Activated CD8-positive, alpha-beta memory T cell treated with anti-CD3 and anti-CD28 coated beads, Interleukin-2, amount 10 ng/mL, durations not matched to agents 7 days and 5 days (primary cell): ENCODE measurements at regions of chr16 and their contacts with region 1.

Region 1: DNA sequence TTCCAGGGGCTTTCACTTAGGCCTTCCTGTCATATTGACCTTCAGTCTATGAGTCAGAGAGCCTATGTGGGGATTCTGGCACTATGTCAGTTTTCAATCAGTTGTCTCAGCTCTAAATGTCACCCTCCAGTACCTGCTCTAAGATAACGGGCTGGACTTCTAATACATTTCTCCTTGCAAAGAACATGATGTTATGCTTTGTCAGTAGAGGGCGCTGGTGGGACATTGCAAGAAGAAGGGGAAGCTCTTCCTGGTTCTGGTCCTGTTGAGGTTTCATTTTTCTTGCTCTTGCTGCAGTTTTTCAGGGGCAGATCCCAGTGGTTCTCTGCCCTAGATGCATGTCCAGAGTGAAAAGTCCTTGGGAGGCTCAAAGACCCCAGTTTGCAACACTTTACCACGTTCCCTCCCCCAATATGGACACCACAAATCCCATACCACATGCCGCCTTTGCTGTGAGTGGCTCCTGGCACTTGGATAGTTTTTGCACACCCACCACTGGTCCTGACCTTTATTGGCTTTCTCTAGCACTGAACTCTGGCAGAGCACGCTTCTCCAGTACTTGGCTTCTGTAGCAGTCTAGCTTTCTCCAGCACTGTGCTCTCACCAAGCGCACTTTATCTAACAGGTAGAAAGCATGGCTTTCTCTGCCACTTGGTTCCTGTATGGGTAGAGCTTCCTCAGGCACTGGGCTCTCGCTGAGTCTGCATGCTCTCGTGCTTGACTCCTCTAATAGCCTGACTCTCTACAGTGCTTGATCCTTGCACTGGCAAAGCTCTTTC is 49.0 kb downstream of the BCL7C start:
- DNase-seq: peak; percentile 89
- ATAC-seq: peak; percentile 95
- H3K4me3 Mint-ChIP-seq: peak overlapping the region; percentile 45
- H3K27ac Mint-ChIP-seq: peak overlapping the region; percentile 80
- H3K4me1 Mint-ChIP-seq: peaks cover 12% of the 10 kb centered on the region
- H3K27me3 Mint-ChIP-seq: peaks cover 2% of the 10 kb centered on the region

Region 2: DNA sequence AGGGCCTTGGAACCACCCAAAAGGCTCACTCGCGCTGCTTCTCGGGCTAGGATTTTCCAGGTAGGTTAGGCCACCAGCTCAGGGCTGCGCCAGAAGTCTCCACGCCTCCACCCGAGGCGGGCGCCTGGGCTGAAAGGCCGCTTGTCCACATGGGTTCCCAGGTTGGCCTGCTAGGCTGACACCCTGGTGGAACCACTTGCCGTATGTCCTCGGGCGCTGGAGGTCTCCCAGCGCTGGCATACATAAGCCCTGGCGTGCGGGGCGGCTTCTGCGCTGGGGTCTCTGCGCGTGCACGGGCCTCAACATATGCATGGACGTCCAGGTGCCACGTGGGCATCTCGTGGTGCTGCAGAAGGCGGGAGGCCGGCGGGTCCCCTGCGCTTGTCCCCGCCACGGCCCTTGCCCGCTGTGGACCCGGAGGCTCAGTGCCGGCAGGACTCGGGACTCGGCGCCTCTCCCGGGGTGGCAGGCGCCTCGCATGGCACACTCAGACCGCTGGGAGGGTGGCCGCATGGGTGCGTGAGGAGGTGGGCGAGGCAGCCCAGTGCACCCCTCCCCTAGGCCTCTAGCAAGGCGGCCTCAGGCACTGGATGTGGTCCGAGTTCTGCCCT is 10.6 kb before region 1 on chr16:
- CTCF ChIA-PET with region 1: interaction called, 15 read pairs
- DNase-seq: no peak
- ATAC-seq: no peak
- H3K4me3 Mint-ChIP-seq: no peak overlapping the region
- H3K27ac Mint-ChIP-seq: no peak overlapping the region
- H3K4me1 Mint-ChIP-seq: no peaks in the 10 kb centered on the region
- H3K27me3 Mint-ChIP-seq: peaks cover 4% of the 10 kb centered on the region

Region 3: GRCh38 chr16:30874821-30875717 is 30.2 kb after region 1 on chr16:
- CTCF ChIA-PET with region 1: interaction called, 44 read pairs
- DNase-seq: peak; percentile 92
- ATAC-seq: peak; percentile 90
- H3K4me3 Mint-ChIP-seq: peak overlapping the region; percentile 82
- H3K27ac Mint-ChIP-seq: peak overlapping the region; percentile 93
- H3K4me1 Mint-ChIP-seq: peaks cover 37% of the 10 kb centered on the region
- H3K27me3 Mint-ChIP-seq: no peaks in the 10 kb centered on the region

Region 4: GRCh38 chr16:30922420-30922959 is 77.6 kb after region 1 on chr16:
- CTCF ChIA-PET with region 1: interaction called, 115 read pairs
- DNase-seq: peak; percentile 100
- ATAC-seq: peak; percentile 85
- H3K4me3 Mint-ChIP-seq: peak overlapping the region; percentile 87
- H3K27ac Mint-ChIP-seq: peak overlapping the region; percentile 99
- H3K4me1 Mint-ChIP-seq: peaks cover 18% of the 10 kb centered on the region
- H3K27me3 Mint-ChIP-seq: no peaks in the 10 kb centered on the region

Region 5: DNA sequence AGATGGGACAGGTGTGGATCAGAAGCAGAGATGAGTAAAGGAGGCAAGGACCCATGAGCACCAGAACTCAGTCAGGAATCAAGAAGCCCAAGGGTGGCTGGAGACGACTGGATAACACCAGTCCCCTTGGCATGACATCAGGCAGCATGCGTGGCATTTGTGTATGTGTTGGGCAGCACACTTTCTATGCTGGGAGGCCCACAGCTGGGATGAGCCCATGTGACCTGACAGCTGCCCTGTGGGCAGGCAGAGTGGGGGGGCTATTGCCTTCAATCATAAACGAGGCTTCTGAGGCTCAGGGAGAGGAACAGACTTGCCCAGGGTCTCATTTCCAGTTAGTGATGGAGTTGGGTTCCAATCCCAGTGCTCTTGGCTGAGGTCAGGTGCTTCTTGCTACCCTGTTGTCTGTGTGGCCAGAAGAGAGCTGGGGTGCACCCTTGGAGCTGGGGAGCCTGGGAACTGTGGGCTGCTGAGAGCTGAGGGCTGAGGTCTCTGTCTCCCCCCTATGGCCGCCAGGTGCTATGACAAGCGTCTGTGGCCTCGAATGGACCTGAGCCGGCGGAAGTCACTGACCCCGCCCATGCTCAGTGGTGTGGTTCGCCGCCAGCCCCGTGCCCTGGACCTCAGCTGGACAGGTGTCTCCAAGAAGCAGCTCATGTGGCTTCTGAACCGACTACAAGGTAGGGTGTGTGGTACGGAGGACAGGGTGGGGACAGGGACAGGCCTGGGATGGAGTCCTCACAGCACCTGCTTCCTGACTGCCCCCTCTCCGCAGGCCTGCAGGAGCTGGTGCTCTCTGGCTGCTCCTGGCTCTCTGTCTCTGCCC is 97.0 kb after region 1 on chr16:
- CTCF ChIA-PET with region 1: interaction called, 68 read pairs
- DNase-seq: peak; percentile 86
- ATAC-seq: peak; percentile 96
- H3K4me3 Mint-ChIP-seq: peak overlapping the region; percentile 69
- H3K27ac Mint-ChIP-seq: peak overlapping the region; percentile 80
- H3K4me1 Mint-ChIP-seq: peaks cover 41% of the 10 kb centered on the region
- H3K27me3 Mint-ChIP-seq: no peaks in the 10 kb centered on the region